ENCODE measurements at regions of chr9 and their contacts with region 1.

Region 1: DNA sequence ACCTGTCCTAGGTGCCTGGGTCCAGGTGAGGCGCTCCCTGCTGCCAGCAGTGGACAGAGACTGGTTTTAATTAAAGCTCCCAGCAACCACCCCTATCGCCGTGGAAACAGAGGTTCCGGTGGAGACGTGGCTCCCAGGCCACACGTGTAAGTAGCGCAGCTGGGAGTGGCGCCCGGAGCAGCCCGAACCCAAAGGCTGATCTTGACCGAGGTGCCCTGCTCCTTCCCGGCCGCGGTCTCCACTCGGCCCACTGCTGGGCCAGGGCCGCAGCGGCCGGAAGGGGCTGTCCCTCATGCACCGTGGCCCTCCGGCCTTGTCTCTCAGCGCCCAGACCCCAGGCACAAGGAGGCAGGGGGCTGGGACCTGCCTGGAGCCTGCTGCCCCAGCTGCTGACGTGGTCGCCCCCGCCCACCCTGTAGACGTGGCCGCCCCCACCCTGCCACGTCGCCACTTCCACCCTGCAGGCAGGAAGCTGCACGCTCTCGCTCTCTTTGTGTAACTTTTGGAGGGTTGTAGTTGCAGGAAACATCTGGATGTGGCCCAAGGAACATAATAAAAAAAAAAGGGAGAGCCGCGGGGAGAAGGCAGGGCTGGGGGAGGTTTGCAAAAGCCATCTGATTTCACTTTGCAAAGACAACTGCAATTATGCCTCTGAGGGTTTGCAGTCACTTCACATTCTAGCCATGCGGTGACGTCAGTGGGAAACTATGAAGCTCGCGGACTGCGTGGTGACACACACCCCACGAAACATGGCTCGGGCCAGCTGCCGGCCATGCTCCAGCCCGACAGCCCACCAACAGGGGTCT is 129.9 kb downstream of the RXRA start:
- DNase-seq: peak; percentile 72
- H3K4me3 ChIP-seq: no peak overlapping the region
- H3K27ac ChIP-seq: peak overlapping the region; percentile 81 to 87
- H3K4me1 ChIP-seq: peaks cover 20% of the 10 kb centered on the region
- H3K27me3 ChIP-seq: no peaks in the 10 kb centered on the region
- CTCF ChIP-seq: no peak
- POLR2A ChIP-seq: no peak

Region 2: DNA sequence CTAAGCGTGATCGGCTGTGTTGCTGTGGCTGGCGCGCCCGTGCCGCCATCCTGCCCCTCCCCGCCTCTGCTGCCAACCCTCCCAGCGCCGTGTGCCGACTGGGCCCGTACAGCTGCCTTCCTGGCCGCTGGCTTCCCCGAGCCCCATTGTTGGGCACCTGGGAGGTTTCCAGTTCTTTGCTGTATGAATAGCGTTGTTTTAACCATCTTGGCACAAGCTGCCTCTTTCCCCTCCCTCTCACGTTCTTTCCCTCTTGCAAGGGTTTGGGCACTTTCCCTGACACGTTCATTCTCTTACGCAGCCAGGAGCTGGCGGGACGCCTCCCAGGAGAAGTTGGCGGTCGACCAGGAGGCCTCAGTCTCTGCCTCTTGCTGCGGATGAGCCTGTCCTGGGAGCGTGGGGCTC is 173.0 kb before region 1 on chr9:
- intact Hi-C with region 1: no loop called
- DNase-seq: peak; percentile 86
- H3K4me3 ChIP-seq: no peak overlapping the region
- H3K27ac ChIP-seq: no peak overlapping the region
- H3K4me1 ChIP-seq: peaks cover 12% of the 10 kb centered on the region
- H3K27me3 ChIP-seq: no peaks in the 10 kb centered on the region
- CTCF ChIP-seq: no peak
- POLR2A ChIP-seq: no peak

Region 3: DNA sequence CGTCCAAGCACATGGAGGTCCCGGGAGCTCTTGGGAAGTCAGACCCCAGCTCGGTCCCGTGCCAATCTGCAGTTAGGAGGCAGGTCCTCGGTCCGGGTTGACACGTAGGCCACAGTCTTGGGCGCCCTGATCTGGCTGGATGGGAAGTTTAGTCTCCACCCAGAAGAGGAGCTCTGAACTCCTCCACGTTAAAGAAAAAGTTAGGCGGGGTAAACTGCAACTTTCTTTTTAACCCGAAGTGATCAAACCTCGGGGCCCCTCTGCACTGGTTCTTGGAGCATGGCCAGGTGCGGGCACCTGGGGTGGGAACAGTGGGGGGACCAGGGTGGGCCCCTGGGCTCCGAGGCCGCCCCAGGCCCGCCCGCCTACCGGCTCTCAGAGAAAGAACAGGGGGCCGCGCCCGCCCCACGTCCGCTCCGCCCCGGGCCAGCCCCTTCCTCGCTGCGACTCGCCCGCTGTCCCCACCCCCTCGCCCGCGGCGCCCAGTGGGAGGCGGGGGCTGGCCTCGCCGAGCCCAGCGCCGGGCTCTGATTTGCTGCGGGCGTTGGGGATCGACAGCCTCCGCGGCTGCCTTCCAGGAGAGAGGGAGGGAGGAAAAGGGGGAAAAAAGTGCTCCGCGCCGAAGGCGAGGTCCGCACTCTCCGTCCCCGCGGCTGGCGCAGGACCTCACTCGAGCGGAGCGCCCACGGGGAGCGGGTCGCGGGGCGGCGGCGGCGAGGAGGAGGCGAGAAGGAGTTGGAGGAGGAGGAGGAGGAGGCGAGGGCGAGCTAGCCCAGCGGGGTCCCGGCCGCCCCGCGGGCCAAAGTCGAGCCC is 185.2 kb after region 1 on chr9 and contains the start of gene COL5A1:
- intact Hi-C with region 1: loop called (anchors 5 kb)
- DNase-seq: peak; percentile 89
- H3K4me3 ChIP-seq: peak within 1 kb of the TSS; percentile 63 to 65
- H3K27ac ChIP-seq: peak within 1 kb of the TSS; percentile 39 to 80
- H3K4me1 ChIP-seq: peaks cover 9% of the 10 kb centered on the region
- H3K27me3 ChIP-seq: no peaks in the 10 kb centered on the region
- CTCF ChIP-seq: no peak
- POLR2A ChIP-seq: no peak
- total RNA-seq, gene COL5A1: 18.5 to 20.8 TPM

Region 4: DNA sequence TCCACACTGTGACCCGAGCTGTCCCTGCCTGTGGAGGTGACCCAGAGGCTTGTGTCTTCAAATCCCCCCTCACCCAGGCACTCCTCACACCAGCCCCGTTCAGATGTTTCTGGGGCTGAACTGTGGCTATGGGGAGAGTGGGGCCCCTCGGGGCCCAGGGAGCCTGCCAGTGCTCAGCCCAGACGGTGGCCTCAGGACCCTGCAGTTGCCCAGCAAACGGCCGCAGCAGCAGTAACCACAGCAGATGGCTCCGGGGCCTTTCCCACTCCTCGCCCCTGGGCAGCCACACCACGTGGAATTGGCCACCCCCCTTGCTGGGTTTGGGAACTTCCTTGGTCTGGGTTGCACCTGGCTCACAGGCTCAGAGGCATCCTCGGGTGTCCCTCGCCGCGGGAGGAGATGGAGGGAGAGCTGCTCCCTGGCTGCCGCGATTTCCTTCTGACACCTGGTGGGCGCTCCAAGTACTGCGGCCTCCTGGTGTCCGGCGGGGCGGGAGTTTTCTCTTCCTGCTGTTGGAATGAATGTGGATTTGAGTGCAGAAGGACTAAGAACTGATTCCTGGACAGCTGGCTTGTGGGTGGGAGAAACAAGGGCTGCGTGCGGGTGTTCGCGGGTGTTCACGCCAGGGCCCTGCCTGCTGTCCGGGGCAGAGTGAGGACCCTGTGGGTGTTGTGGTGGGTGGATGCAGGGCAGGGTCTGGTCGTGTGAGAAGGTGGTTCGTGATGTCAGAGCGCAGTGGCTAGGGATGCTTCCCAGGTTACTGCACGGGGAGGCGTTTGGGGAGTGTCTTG is 282.9 kb after region 1 on chr9:
- intact Hi-C with region 1: loop called (anchors 10 kb)
- DNase-seq: peak; percentile 83
- H3K4me3 ChIP-seq: no peak overlapping the region
- H3K27ac ChIP-seq: no peak overlapping the region
- H3K4me1 ChIP-seq: peaks cover 13% of the 10 kb centered on the region
- H3K27me3 ChIP-seq: no peaks in the 10 kb centered on the region
- CTCF ChIP-seq: peak; percentile 91 to 93 (median 93)
- POLR2A ChIP-seq: no peak